H1 (cell line): ENCODE measurements at regions of chr17 and their contacts with region 1.

Region 1: DNA sequence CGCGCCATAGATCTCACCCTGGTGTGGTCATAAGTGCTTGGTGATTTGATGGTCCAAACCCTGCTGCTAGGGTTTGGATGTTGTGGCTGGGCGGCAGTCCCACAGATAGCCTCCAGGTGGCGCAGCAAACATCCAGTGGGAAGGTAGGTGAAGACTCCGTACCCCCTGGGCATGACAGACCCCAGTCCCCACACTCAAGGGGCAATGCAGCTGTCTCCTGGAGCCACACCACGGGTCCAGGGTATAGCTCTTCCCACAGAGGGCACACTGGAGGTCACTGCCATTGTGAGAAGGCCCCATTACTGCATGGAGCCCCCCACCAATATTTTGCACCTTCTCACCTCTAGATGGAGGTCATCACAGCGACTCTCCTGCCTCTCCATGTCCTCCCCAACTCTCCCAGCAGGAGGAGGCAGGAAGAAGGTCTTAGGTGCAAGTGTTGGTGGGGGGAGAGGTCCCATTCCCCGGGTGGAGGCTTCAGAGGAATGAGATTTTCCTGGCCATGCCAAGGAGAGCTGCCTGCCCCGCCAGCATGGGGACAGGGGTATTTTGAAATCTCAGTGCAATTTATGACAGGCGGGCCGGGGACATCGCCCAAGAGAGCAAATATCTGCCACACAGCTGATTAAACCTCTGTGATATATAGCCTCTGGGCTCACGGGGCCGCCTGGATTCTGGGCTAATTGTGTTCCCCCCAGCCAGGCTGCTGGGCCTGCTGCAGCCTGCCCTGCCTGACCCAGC is 17.1 kb upstream of the C17orf113 start:
- DNase-seq: peak in 1 of 2 experiments; percentile 96
- H3K4me3 ChIP-seq: no peak overlapping the region
- H3K27ac ChIP-seq: no peak overlapping the region
- H3K4me1 ChIP-seq: peaks cover 0 to 12% (median 5%) of the 10 kb centered on the region in 4 experiments; a peak in 6 of 7 replicates
- H3K27me3 ChIP-seq: no peaks in the 10 kb centered on the region; a peak in 2 of 7 replicates
- CTCF ChIP-seq: peak; percentile 79 to 98 (median 84)
- EP300 ChIP-seq: no peak
- POLR2A ChIP-seq: no peak
- RAD21 ChIP-seq: peak; percentile 60 to 62

Region 2: GRCh38 chr17:41996855-41997164 is 70.7 kb before region 1 on chr17:
- CTCF ChIA-PET with region 1: no interaction called
- POLR2A ChIA-PET with region 1: no interaction called
- DNase-seq: no peak
- H3K4me3 ChIP-seq: no peak overlapping the region
- H3K27ac ChIP-seq: no peak overlapping the region
- H3K4me1 ChIP-seq: no peaks in the 10 kb centered on the region
- H3K27me3 ChIP-seq: no peaks in the 10 kb centered on the region
- CTCF ChIP-seq: no peak
- EP300 ChIP-seq: no peak
- POLR2A ChIP-seq: no peak
- RAD21 ChIP-seq: no peak

Region 3: DNA sequence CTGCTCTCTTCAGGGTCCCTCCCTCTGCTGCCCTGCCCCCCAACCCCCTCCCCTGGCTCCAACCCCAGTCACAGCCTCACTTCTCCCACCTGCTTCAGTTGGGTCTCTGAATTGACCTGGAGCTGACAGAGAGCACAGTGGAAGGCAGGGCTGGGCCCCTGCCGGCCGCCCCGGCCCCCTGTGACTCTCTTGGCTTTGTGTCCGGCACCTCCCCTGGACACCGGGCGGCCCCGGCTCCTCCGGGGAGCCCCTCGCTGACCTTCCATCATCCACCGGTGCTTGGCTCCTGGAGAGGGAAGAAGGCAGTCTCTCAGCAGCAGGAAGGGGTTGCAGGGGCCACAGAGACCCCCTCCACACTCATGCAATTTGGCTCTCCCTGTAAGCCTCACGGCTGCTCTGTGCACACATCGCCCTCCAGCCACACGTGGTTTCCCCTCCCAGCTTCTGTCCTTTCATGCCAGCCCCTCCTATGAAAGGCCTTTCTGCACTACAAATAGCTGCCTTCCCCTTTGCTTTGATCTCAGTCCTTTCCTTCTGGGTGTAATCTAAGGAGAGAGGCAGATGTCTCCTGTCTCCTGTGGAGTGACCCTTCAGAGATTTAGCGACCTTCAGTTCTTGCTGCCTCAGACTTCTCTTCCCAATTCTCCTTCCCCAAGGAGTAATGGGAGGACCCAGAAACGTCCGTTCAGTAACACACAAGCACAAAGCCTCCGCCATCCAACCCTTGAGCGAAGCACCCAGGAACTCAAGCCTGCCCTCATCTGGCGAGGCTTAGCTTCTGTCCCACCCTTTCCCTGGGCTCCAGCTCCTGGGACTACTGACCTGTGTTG is 39.3 kb before region 1 on chr17:
- CTCF ChIA-PET with region 1: interaction called, 93 read pairs
- POLR2A ChIA-PET with region 1: interaction called, 3 read pairs
- DNase-seq: peak in 1 of 2 experiments; percentile 77
- H3K4me3 ChIP-seq: no peak overlapping the region
- H3K27ac ChIP-seq: no peak overlapping the region
- H3K4me1 ChIP-seq: peaks cover 0 to 12% (median 5%) of the 10 kb centered on the region in 4 experiments; a peak in 4 of 7 replicates
- H3K27me3 ChIP-seq: no peaks in the 10 kb centered on the region
- CTCF ChIP-seq: peak; percentile 65 to 91 (median 80)
- EP300 ChIP-seq: no peak
- POLR2A ChIP-seq: no peak
- RAD21 ChIP-seq: peak; percentile 35 to 58

Region 4: GRCh38 chr17:42039794-42040763 is 27.4 kb before region 1 on chr17:
- CTCF ChIA-PET with region 1: interaction called, 22 read pairs
- POLR2A ChIA-PET with region 1: no interaction called
- DNase-seq: no peak
- H3K4me3 ChIP-seq: no peak overlapping the region
- H3K27ac ChIP-seq: no peak overlapping the region
- H3K4me1 ChIP-seq: peaks cover 0 to 6% (median 2%) of the 10 kb centered on the region in 4 experiments; a peak in 1 of 7 replicates
- H3K27me3 ChIP-seq: no peaks in the 10 kb centered on the region
- CTCF ChIP-seq: no peak
- EP300 ChIP-seq: no peak
- POLR2A ChIP-seq: no peak
- RAD21 ChIP-seq: no peak

Region 5: DNA sequence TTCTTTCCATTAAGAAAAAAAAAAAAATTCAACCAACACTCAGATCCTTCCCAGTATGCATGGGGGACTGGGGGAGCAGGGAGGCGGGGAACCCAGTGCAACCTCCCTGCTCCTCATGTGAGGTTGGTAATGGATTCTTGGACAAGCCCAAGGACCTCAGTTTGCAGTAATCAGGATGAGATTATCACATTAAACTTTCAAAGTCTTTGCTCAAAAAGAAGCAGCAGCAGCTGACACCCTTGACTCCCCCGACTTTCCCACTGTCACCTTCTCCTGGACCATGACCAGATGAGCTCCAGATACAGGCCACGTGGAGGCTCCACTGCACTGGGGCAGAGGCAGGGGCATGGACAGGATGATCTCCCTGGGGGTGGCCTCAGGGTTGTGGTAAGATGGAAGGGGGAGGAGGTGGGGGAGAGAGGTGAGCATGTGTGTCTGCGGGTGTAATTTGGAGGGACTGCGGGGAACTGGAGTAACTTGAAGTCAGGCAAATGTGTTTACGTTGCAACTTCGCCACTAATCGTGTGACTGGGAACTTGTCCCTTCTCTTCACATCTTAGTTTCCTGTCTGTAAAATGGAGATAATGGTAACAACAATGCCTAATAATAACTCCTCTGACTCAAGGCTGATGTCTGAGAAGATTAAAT is 11.0 kb after region 1 on chr17:
- CTCF ChIA-PET with region 1: interaction called, 34 read pairs
- POLR2A ChIA-PET with region 1: interaction called, 5 read pairs
- DNase-seq: no peak
- H3K4me3 ChIP-seq: no peak overlapping the region
- H3K27ac ChIP-seq: no peak overlapping the region
- H3K4me1 ChIP-seq: peaks cover 0 to 4% (median 3%) of the 10 kb centered on the region in 4 experiments; a peak in 3 of 7 replicates
- H3K27me3 ChIP-seq: no peaks in the 10 kb centered on the region
- CTCF ChIP-seq: no peak
- EP300 ChIP-seq: no peak
- POLR2A ChIP-seq: no peak
- RAD21 ChIP-seq: no peak

Region 6: GRCh38 chr17:42101513-42102319 is 34.2 kb after region 1 on chr17:
- CTCF ChIA-PET with region 1: interaction called, 381 read pairs
- POLR2A ChIA-PET with region 1: interaction called, 5 read pairs
- DNase-seq: peak; percentile 73 to 100
- H3K4me3 ChIP-seq: no peak overlapping the region
- H3K27ac ChIP-seq: no peak overlapping the region
- H3K4me1 ChIP-seq: peaks cover 0 to 11% (median 8%) of the 10 kb centered on the region in 4 experiments; a peak in 6 of 7 replicates
- H3K27me3 ChIP-seq: peaks cover 4 to 15% (median 15%) of the 10 kb centered on the region in 4 experiments
- CTCF ChIP-seq: peak; percentile 95 to 99 (median 98)
- EP300 ChIP-seq: no peak
- POLR2A ChIP-seq: no peak
- RAD21 ChIP-seq: peak; percentile 93 to 96

Region 7: DNA sequence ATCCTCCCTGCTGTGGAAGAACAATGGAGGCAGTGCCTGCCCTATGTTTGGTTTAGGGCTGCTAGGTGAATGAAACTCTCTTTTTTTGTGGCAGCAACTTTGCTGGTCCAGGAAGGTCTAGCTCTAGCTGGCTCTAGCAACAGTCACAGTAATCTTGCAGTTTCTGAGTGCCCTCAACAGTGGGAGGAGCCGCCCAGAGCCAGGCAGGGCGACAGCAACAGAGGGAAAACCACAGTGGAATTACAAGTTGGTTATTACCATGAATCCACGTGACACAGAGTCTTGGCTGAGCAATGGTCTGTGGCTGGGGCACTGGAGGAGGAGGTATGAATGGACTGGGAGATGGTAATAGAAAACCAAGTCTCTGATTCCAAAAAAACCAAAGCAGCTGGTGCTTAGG is 65.4 kb after region 1 on chr17:
- CTCF ChIA-PET with region 1: interaction called, 11 read pairs
- POLR2A ChIA-PET with region 1: no interaction called
- DNase-seq: no peak
- H3K4me3 ChIP-seq: no peak overlapping the region
- H3K27ac ChIP-seq: no peak overlapping the region
- H3K4me1 ChIP-seq: peaks cover 0 to 6% (median 1%) of the 10 kb centered on the region in 4 experiments; a peak in 3 of 7 replicates
- H3K27me3 ChIP-seq: no peaks in the 10 kb centered on the region
- CTCF ChIP-seq: no peak
- EP300 ChIP-seq: no peak
- POLR2A ChIP-seq: no peak
- RAD21 ChIP-seq: no peak